ENCODE measurements at regions of chr19 and their contacts with region 1.

Region 1: GRCh38 chr19:48391107-48391986 is at the start of gene KDELR1:
- DNase-seq: peak; percentile 65 to 69
- H3K4me3 ChIP-seq: peak within 1 kb of the TSS; percentile 84 to 96 (median 94)
- H3K27ac ChIP-seq: peak within 1 kb of the TSS; percentile 86 to 94 (median 91)
- H3K4me1 ChIP-seq: peaks cover 9 to 22% of the 10 kb centered on the region in 2 donors
- H3K27me3 ChIP-seq: peaks cover 24% of the 10 kb centered on the region
- CTCF ChIP-seq: peak; percentile 67 to 91 (median 81)
- POLR2A ChIP-seq: peak in 1 of 2 donors; percentile 70
- total RNA-seq, gene KDELR1: 121 to 160 (median 141) TPM

Region 2: DNA sequence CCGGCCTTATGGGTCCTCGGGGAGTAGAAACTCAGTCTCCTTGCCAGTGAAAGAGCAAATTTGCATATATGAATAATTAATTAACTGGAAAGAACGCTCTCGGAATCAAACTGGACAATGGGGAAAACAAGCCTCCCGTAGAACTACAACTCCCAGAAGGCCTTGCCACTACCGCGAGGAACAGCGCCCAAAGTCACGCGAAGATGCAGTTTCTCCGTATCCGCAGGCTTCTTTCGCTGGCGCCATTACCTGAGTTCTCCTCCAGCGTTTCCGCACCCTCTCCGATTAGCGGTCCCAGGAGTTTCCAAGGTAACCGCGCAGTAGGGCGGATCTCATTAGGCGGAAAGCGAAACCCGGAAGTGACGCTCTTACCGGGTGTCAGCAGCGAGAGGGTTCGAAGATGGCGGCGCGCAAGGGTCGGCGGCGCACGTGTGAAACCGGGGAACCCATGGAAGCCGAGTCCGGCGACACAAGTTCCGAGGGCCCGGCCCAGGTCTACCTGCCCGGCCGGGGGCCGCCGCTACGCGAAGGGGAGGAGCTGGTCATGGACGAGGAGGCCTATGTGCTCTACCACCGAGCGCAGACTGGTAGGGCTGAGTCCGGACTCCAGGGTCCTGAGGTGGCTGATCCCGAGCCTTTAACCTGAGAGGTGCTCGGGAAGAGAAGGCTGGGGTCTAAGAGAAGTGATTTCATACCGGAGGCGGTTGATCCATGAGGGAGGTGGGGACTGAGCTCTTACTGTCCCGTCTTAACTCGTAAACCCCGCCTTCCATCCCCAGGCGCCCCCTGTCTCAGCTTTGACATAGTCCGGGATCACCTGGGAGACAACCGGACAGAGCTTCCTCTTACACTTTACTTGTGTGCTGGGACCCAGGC is 54.5 kb after region 1 on chr19 and contains the start of gene GRWD1:
- intact Hi-C with region 1: loop called (anchors 10 kb)
- DNase-seq: peak; percentile 94 to 95
- H3K4me3 ChIP-seq: peak within 1 kb of the TSS; percentile 16 to 67 (median 50)
- H3K27ac ChIP-seq: peak within 1 kb of the TSS; percentile 72 to 89 (median 82)
- H3K4me1 ChIP-seq: peaks cover 19 to 20% of the 10 kb centered on the region in 2 donors
- H3K27me3 ChIP-seq: no peaks in the 10 kb centered on the region
- CTCF ChIP-seq: peak in 2 of 6 experiments; percentile 2 to 7
- POLR2A ChIP-seq: peak in 1 of 2 donors; percentile 52
- total RNA-seq, gene GRWD1: 22.4 to 40.5 (median 29.1) TPM